Head of caudate nucleus (tissue), 42 donors: ENCODE measurements at regions of chr20 and their contacts with region 1.

Region 1: DNA sequence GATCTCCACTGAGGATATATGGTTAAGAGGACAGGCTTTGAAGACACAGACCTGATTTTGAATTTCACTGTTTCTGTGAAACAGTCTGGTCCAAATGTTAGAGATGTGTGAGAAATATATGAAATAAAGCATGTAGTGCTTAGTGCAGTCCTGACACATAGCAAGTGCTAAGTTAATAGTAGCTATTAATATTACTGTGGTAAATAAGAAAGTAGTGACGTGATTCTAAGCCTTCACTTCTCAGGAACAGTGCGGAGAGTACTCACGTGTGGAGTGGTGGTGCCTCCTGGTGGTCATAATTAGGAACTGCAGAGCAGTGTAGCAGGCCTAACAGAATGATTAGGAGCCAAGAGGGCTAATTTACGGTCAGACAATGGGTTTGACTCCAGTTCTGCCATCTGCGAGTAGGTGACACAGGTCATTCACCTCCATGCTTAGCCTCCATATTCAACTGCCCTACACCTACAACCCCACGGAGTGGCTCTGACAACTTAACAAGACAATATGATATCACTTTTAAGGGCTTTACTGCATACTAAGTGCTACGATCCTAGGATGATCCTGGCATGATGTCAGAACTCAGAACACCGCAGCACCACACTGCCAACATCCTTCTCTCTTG is 106.2 kb downstream of the JPH2 start:
- DNase-seq: peak in 41 of 42 donors; percentile 58 to 93 (median 81)

Region 2: GRCh38 chr20:43448748-43449535 is 631.8 kb before region 1 on chr20:
- intact Hi-C with region 1: loop called (anchors 10 kb)
- DNase-seq: peak in 40 of 42 donors; percentile 12 to 79 (median 46)

Region 3: GRCh38 chr20:43749734-43750294 is 330.9 kb before region 1 on chr20:
- intact Hi-C with region 1: loop called (anchors 5 kb)
- DNase-seq: peak; percentile 45 to 93 (median 82)